ENCODE measurements at regions of chr22 and their contacts with region 1.

Region 1: DNA sequence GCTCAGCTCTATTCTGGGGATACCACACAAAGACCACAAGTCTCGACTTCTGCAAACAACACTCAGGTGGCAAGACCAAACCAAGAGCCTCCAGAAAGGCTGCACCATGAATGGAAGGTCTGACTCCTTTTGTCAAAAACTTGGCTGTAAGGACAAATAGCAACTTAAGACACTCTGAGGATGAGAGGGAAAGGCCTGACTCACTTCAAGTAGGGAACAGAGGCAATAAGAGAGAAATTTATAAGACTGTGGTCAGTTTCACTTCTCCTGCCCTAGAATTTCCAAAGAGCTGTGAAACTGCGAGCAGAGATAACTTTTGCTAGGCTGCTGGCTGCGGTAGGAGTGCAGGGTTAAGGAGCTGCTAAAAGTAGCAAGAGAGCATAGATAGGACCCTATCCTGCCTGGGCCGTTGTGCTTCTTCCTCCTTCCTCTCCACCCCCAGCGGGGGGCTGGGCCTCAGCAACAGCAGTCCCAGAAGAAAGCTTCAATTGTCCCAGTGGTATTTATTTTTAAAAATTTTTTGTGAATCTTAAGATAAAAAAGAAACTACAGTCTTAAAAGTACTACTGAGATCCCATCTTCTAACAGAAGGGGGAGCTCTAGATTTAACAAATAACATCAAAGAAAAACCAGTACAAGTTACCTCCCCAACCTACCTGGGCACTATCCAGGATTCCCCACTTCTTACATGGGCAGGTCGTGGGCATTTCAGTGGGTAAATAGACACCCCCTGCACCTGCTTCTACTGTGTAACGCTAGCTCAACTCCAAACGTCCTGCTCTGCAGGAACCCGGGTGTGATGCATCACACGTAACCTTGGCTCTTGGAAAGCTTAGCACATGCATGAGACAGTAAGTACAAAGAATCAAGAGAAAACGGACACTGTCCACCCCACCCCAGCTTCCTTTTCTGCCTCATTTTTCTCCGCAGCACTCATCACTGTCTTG is 66.4 kb downstream of the SGSM3 start:
- DNase-seq: no peak
- H3K4me3 ChIP-seq: peak overlapping the region; percentile 7 to 49
- H3K27ac ChIP-seq: peak overlapping the region; percentile 64 to 72
- H3K4me1 ChIP-seq: peaks cover 10 to 25% of the 10 kb centered on the region in 2 donors
- H3K27me3 ChIP-seq: no peaks in the 10 kb centered on the region
- CTCF ChIP-seq: peak; percentile 68 to 70 (median 68)

Region 2: DNA sequence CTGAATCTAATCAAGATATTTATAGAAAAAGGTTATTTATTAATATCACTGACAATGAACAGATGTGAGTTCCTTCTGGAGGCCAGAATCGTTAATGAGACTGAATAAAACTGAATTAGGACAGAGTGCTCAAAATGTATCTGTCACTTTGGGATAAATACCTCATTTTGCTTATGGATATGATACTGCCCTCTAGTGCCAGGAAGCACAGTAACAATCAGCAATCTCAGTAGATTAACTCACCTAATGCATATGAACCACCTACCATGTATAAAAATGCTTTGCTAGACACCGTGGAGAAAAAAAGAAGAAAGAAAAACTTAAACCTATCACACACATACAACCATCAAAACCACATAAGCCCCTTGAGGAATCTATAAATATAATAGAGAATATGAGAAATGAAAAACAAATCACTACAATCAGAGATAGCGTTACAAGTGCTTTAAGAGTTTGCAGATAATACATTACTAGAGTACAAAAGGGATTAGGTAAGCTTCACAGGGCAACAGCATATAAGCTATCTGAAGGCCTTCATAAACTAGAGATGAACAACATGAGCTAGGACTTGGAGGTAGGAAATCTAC is 51.0 kb after region 1 on chr22:
- intact Hi-C with region 1: loop called (anchors 5 kb)
- DNase-seq: no peak
- H3K4me3 ChIP-seq: no peak overlapping the region
- H3K27ac ChIP-seq: peak overlapping the region in 1 of 2 donors; percentile 10
- H3K4me1 ChIP-seq: peaks cover 18 to 35% of the 10 kb centered on the region in 2 donors
- H3K27me3 ChIP-seq: no peaks in the 10 kb centered on the region
- CTCF ChIP-seq: peak; percentile 39 to 54 (median 54)

Region 3: GRCh38 chr22:40645579-40646197 is 208.9 kb after region 1 on chr22:
- intact Hi-C with region 1: loop called (anchors 1 kb)
- DNase-seq: no peak
- H3K4me3 ChIP-seq: no peak overlapping the region
- H3K27ac ChIP-seq: peak overlapping the region; percentile 46 to 77
- H3K4me1 ChIP-seq: peaks cover 0 to 8% of the 10 kb centered on the region in 2 donors
- H3K27me3 ChIP-seq: no peaks in the 10 kb centered on the region
- CTCF ChIP-seq: no peak

Region 4: DNA sequence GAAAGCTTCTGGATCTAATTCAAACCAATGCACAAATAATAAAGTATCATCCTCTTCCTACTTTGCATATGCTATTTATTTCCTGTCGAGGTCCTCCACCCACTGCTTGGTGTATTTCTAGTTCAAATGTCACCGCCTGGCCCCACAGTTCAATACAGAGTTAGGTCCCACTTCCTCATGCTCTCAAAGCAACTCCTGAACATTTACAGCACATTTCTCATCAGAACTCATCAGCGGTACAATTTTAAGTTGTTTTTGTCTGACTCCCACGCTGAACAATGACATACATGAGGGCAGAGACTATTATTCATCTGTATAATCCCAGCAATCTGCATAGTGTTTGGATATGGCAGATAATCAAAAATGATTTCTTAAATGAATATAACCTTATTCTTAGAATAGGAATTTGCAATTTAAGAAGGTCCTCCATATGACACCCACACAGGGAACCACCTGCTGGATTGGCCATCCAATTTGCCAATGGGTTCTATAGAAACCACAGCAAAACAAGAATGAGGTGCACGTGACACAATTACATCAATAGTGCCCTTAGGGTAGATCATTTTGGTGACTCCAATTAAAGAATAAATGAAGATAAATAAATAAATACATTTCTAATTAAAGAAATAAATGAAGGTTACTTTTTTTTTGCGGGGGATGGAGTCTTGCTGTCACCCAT is 328.1 kb after region 1 on chr22:
- intact Hi-C with region 1: loop called (anchors 10 kb)
- DNase-seq: no peak
- H3K4me3 ChIP-seq: no peak overlapping the region
- H3K27ac ChIP-seq: no peak overlapping the region
- H3K4me1 ChIP-seq: no peaks in the 10 kb centered on the region
- H3K27me3 ChIP-seq: no peaks in the 10 kb centered on the region
- CTCF ChIP-seq: no peak